K562 (cell line): ENCODE measurements at regions of chr2 and their contacts with region 1.

Region 1: GRCh38 chr2:65064728-65065552 is 8.7 kb downstream of the CEP68 start:
- DNase-seq: peak; percentile 51 to 79 (median 57)
- ATAC-seq: peak; percentile 81
- H3K4me3 ChIP-seq: no peak overlapping the region
- H3K27ac ChIP-seq: peak overlapping the region; percentile 76
- H3K4me1 ChIP-seq: peaks cover 23 to 36% of the 10 kb centered on the region in 2 experiments
- H3K27me3 ChIP-seq: no peaks in the 10 kb centered on the region
- CTCF ChIP-seq: peak; percentile 80 to 90 (median 84)
- EP300 ChIP-seq: 0 out of 2 replicates have a peak, but pooled peaks have one; percentile 9
- POLR2A ChIP-seq: no peak
- RAD21 ChIP-seq: peak; percentile 80 to 93

Region 2: GRCh38 chr2:65129826-65130663 is 65.1 kb after region 1 on chr2 and contains the start of gene RAB1A:
- CTCF ChIA-PET with region 1: no interaction called
- POLR2A ChIA-PET with region 1: interaction called, 3 read pairs
- in situ Hi-C with region 1: no loop called
- intact Hi-C with region 1: loop called (anchors 2 kb)
- DNase-seq: peak; percentile 93 to 99 (median 96)
- ATAC-seq: peak; percentile 94
- H3K4me3 ChIP-seq: peak within 1 kb of the TSS; percentile 100
- H3K27ac ChIP-seq: peak within 1 kb of the TSS; percentile 99
- H3K4me1 ChIP-seq: peaks cover 30 to 32% of the 10 kb centered on the region in 2 experiments
- H3K27me3 ChIP-seq: no peaks in the 10 kb centered on the region
- CTCF ChIP-seq: peak; percentile 27 to 67 (median 63); a peak in 4 of 6 replicates
- EP300 ChIP-seq: 0 out of 2 replicates have a peak, but pooled peaks have one; percentile 33
- POLR2A ChIP-seq: peak; percentile 92
- RAD21 ChIP-seq: no peak
- polyA plus RNA-seq, gene RAB1A: 43.8 to 47.8 TPM

Region 3: GRCh38 chr2:65169760-65170136 is 104.8 kb after region 1 on chr2:
- CTCF ChIA-PET with region 1: interaction called, 3 read pairs
- POLR2A ChIA-PET with region 1: interaction called, 4 read pairs
- in situ Hi-C with region 1: no loop called
- intact Hi-C with region 1: loop called (anchors 1 kb)
- DNase-seq: no peak
- ATAC-seq: no peak
- H3K4me3 ChIP-seq: no peak overlapping the region
- H3K27ac ChIP-seq: no peak overlapping the region
- H3K4me1 ChIP-seq: no peaks in the 10 kb centered on the region; a peak in 1 of 5 replicates
- H3K27me3 ChIP-seq: no peaks in the 10 kb centered on the region
- CTCF ChIP-seq: no peak
- EP300 ChIP-seq: no peak
- POLR2A ChIP-seq: no peak
- RAD21 ChIP-seq: no peak

Region 4: DNA sequence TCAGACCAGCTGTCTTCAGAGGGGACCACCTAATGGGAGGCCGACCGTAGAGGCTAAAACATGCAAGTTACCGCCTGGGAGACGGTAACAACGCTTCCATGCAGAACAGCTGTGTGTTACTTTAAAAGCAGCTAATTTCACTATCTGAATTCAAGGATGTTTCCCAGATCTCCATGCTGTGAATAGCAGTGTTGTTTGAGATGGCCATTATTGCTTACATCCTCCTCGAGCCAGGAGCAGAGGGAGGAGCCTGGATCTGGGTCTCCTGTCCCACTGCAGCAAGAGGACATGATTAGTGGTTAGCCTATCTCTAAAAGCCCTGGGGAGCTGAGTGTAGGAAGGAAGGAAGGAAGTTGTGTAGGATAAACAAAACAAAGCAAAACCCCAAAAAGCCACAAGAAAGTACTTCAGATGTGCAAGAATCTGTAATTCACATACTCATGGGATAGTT is 213.6 kb after region 1 on chr2:
- CTCF ChIA-PET with region 1: no interaction called
- POLR2A ChIA-PET with region 1: interaction called, 4 read pairs
- in situ Hi-C with region 1: no loop called
- intact Hi-C with region 1: loop called (anchors 5 kb)
- DNase-seq: peak in 2 of 4 experiments; percentile 58 to 62
- ATAC-seq: peak; percentile 83
- H3K4me3 ChIP-seq: no peak overlapping the region
- H3K27ac ChIP-seq: no peak overlapping the region
- H3K4me1 ChIP-seq: peaks cover 4 to 17% of the 10 kb centered on the region in 2 experiments; a peak in 4 of 5 replicates
- H3K27me3 ChIP-seq: no peaks in the 10 kb centered on the region
- CTCF ChIP-seq: no peak
- EP300 ChIP-seq: peak; percentile 15; the same call in 1 of the 2 replicates
- POLR2A ChIP-seq: no peak
- RAD21 ChIP-seq: no peak; a peak in 1 of 4 replicates

Region 5: DNA sequence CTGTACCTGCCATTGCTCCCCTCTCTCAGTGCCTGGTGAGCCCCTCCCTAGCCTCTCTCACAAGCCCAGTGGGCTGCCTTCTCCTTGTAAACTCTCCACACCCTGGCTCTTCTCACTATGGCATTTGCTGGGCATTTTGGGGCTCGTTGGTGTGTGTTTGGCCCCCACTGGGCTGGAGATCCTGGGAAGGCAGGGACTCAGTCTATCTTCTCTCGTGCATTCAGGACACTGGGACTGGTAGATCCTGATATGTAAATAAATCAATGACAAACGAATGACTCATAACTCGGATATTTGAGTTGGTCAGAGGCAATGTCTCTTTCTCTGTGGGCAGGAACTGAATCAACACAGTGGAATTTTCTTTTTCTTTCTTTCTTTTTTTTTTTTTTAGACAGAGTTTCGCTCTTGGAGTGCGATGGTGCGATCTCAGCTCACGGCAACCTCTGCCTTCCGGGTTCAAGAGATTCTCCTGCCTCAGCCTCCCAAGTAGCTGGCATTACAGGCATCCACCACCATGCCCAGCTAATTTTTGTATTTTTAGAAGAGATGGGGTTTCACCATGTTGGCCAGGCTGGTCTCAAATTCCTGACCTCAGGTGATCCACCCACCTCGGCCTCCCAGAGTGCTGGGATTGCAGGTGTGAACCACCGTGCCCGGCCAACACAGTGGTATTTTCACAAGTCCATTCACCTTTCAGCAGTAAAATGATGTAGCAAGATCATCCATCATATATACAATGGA is 512.1 kb after region 1 on chr2:
- CTCF ChIA-PET with region 1: no interaction called
- POLR2A ChIA-PET with region 1: no interaction called
- in situ Hi-C with region 1: loop called (anchors 10 kb)
- intact Hi-C with region 1: loop called (anchors 5 kb)
- DNase-seq: peak in 1 of 4 experiments; percentile 52
- ATAC-seq: peak; percentile 53; the same call in 2 of the 3 replicates
- H3K4me3 ChIP-seq: no peak overlapping the region
- H3K27ac ChIP-seq: no peak overlapping the region
- H3K4me1 ChIP-seq: peaks cover 2 to 4% of the 10 kb centered on the region in 2 experiments; a peak in 3 of 5 replicates
- H3K27me3 ChIP-seq: peaks cover 3 to 12% of the 10 kb centered on the region in 2 experiments; a peak in 4 of 5 replicates
- CTCF ChIP-seq: no peak
- EP300 ChIP-seq: no peak
- POLR2A ChIP-seq: no peak
- RAD21 ChIP-seq: no peak